Sigmoid colon (tissue), 7 donors: ENCODE measurements at regions of chr9 and their contacts with region 1.

Region 1: GRCh38 chr9:127785023-127785932 is 556 bp upstream of the CDK9 start:
- DNase-seq: peak; percentile 95
- H3K4me3 ChIP-seq: peak overlapping the region; percentile 63 to 100 (median 96)
- H3K27ac ChIP-seq: peak overlapping the region; percentile 96 to 99 (median 96)
- H3K4me1 ChIP-seq: peaks cover 0 to 36% (median 29%) of the 10 kb centered on the region in 4 donors
- H3K27me3 ChIP-seq: no peaks in the 10 kb centered on the region
- CTCF ChIP-seq: peak; percentile 94 to 98 (median 97)
- EP300 ChIP-seq: no peak
- POLR2A ChIP-seq: no peak

Region 2: GRCh38 chr9:127611899-127612790 is 173.1 kb before region 1 on chr9 and contains the start of gene STXBP1:
- intact Hi-C with region 1: loop called (anchors 5 kb)
- DNase-seq: peak; percentile 94
- H3K4me3 ChIP-seq: peak within 1 kb of the TSS; percentile 64 to 94 (median 84)
- H3K27ac ChIP-seq: peak within 1 kb of the TSS; percentile 91 to 94 (median 92)
- H3K4me1 ChIP-seq: peaks cover 0 to 33% (median 21%) of the 10 kb centered on the region in 4 donors
- H3K27me3 ChIP-seq: no peaks in the 10 kb centered on the region
- CTCF ChIP-seq: peak in 1 of 4 experiments; percentile 28
- EP300 ChIP-seq: no peak
- POLR2A ChIP-seq: peak; percentile 15 to 36
- total RNA-seq, gene STXBP1: 32.3 to 97.2 (median 41.0) TPM

Region 3: GRCh38 chr9:127734747-127735529 is 50.3 kb before region 1 on chr9 and contains the start of gene TOR2A:
- intact Hi-C with region 1: loop called (anchors 1 kb)
- DNase-seq: peak; percentile 99
- H3K4me3 ChIP-seq: peak within 1 kb of the TSS; percentile 50 to 93 (median 76)
- H3K27ac ChIP-seq: peak within 1 kb of the TSS; percentile 91 to 98 (median 98)
- H3K4me1 ChIP-seq: peaks cover 0 to 27% (median 16%) of the 10 kb centered on the region in 4 donors
- H3K27me3 ChIP-seq: no peaks in the 10 kb centered on the region
- CTCF ChIP-seq: peak; percentile 89 to 99 (median 98)
- EP300 ChIP-seq: no peak
- POLR2A ChIP-seq: peak in 1 of 2 donors; percentile 46
- total RNA-seq, gene TOR2A: 6.1 to 10.4 (median 7.9) TPM

Region 4: DNA sequence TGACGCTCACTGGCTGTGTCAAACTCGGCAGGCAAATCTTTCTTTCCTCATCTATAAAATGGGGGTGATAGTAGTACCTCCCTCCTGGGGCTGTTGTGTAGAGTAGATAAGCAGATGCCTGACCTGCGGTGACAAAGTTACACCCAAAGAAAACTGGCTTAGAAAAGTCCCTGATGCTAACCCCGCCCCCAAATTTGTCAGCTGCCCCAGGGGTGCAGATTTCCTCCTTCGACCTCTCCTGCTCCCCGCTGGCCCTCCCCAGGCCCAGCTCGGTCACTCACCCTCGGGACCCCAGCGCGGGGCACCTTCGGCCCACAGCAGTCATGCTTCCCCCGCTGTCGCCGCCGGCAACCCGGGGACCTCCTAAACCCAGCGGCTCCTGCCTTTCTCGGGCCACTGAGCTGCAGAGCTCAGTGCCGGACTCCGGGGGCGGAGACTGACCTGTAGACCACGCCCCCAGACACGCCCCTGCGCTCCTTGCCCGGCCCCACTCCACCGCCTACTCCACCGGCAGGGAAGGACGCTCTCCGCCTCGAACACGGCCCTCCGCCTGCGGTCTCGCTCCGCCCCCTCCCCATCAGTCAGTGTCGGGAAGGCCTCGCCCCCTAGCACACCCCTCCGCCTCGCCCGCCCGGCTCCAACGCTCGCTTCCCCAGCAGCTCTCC is 14.2 kb before region 1 on chr9:
- intact Hi-C with region 1: loop called (anchors 1 kb)
- DNase-seq: peak; percentile 99
- H3K4me3 ChIP-seq: peak overlapping the region; percentile 27 to 57 (median 53)
- H3K27ac ChIP-seq: peak overlapping the region; percentile 56 to 69 (median 63)
- H3K4me1 ChIP-seq: peaks cover 0 to 12% (median 9%) of the 10 kb centered on the region in 4 donors
- H3K27me3 ChIP-seq: no peaks in the 10 kb centered on the region
- CTCF ChIP-seq: no peak
- EP300 ChIP-seq: no peak
- POLR2A ChIP-seq: no peak

Region 5: DNA sequence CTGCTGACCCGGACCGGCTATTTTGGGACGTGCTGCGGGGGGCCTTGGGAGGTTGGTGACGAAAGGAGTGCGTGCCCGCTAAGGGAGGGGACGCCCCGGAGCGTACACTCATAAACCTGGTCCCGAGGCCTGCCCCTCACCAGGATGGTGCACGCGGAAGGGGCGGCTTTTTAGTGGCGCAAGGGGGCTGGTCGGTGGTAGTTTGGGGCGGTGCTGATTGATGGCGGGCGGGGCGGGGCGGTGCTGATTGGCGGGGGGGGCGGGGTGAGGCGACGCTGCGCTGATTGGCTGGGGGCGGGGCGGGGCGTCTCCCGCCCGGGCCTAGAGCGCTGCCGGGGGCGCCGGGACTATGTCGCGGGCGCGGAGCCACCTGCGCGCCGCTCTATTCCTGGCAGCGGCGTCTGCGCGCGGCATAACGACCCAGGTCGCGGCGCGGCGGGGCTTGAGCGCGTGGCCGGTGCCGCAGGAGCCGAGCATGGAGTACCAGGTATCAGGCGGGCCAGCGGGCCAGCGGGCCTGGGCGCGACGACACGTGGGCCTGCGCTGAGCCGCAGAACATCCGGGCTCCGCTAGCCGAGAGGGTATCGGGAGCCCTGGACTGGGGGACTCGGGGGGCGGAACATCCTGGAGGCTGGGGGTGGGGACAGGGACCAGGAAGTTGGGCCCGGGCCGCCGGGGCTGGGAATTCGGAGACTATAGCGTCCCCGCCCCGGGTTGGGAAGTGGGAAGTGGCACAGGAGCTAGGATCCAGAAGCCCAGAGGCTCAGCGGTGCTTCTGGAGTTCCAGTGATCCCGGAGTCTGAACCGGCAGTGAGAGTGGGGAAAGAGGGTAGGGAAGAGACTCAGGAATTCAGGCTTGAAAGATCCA is 17.5 kb after region 1 on chr9 and contains the start of gene FPGS:
- intact Hi-C with region 1: loop called (anchors 2 kb)
- DNase-seq: peak; percentile 96
- H3K4me3 ChIP-seq: peak within 1 kb of the TSS; percentile 50 to 81 (median 70)
- H3K27ac ChIP-seq: peak within 1 kb of the TSS; percentile 88 to 95 (median 92)
- H3K4me1 ChIP-seq: peaks cover 0 to 27% (median 24%) of the 10 kb centered on the region in 4 donors
- H3K27me3 ChIP-seq: no peaks in the 10 kb centered on the region
- CTCF ChIP-seq: no peak
- EP300 ChIP-seq: no peak
- POLR2A ChIP-seq: peak; percentile 48 to 50
- total RNA-seq, gene FPGS: 32.1 to 47.9 (median 35.8) TPM

Region 6: DNA sequence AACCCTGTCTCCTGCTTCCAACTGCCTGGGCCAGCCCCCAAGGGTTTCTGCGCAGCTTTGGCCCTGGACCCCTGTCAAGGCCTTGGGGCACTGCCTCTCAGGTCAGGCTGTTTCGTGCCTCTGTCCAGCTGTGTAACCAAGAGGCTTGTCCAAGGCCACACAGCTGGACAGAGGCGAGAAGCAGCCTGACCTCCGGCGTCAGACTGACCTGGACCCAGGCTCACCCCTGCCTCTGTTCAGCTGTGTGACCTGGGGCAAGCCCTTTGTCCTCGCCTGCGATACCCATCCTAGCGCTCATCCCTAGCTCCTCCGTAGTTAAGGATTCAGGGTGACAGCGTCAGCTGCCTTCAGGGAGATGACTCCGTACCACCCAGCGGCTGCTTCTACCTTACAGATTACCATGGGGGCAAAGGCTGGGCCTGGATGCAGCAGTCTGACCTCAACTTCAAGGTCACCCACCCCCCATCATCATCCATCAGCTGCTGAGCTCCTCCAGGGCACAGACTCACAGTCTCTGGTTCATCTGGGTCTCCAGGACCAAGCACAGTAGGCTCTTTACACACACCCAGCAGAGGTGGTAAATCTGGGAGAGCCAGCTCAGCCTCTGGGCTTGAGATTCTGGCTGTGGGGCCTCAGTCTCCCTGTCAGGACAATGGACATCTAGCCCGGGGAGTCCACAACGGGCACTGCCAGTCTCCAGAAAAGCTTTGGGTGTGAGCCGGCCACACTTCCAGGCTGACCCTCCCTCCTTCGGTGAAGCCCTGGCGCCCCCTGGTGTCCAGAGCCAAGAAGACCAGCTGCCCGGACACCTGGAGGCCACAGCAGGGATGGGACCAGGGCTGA is 84.3 kb after region 1 on chr9:
- intact Hi-C with region 1: loop called (anchors 2 kb)
- DNase-seq: peak; percentile 95
- H3K4me3 ChIP-seq: no peak overlapping the region
- H3K27ac ChIP-seq: peak overlapping the region in 1 of 4 donors; percentile 37
- H3K4me1 ChIP-seq: peaks cover 0 to 17% (median 16%) of the 10 kb centered on the region in 4 donors
- H3K27me3 ChIP-seq: no peaks in the 10 kb centered on the region
- CTCF ChIP-seq: peak; percentile 74 to 90 (median 84)
- EP300 ChIP-seq: no peak
- POLR2A ChIP-seq: no peak